ENCODE measurements at regions of chr2 and their contacts with region 1.

Region 1: DNA sequence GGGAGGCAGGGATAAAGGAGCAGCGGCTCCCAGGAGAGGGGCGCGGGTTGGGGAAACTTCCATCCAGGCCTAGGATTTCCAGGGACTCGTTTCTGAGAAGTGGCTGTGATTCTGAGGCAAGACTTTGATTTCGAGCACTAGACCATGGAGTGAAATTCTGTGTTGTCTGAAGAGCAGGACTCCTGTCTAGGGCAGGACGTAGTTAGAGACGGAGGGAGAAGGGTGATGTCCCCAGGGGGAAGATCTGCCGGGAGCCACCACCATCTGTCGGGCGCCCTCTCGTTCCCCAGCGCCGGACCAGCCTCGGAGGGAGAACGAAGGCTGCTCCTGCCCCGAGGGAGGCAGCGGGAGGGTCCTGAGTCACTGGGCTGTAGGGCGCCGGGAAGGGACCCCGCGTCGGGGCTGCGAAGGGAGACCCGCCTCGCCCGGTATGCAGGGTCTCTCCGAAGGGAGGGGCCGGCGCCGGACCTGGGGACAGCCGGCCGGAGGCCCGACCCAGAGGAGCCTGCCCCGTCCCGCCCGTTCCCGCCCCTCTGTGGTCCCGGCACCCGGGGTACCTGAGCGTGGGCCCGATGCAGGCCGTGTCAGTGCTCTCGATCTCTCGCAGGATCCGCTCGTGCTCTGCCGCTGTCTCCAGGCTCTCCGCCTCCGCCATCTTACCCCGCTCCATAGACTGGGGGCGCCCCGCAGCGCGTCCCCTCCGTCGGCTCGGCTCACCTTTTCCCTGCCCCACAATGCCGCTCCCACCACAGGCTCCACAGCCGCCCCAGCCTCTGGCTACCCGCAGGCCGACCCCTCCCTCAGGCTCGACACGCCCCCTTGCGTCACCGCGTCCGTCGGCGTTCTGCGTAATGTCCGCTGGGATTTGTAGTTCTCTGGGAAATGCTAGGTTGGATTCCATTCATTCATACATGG is at the start of gene EXOC6B:
- DNase-seq: peak; percentile 95 to 96
- ATAC-seq: peak; percentile 96 to 99 (median 97)
- H3K4me3 ChIP-seq: peak within 1 kb of the TSS; percentile 72 to 100 (median 90)
- H3K27ac ChIP-seq: peak within 1 kb of the TSS; percentile 72 to 92 (median 86)
- H3K4me1 ChIP-seq: peaks cover 3 to 49% (median 13%) of the 10 kb centered on the region in 9 donors
- H3K27me3 ChIP-seq: no peaks in the 10 kb centered on the region
- CTCF ChIP-seq: peak in 2 of 9 donors; percentile 26 to 45
- total RNA-seq, gene EXOC6B: 97.9 to 243 (median 158) TPM

Region 2: DNA sequence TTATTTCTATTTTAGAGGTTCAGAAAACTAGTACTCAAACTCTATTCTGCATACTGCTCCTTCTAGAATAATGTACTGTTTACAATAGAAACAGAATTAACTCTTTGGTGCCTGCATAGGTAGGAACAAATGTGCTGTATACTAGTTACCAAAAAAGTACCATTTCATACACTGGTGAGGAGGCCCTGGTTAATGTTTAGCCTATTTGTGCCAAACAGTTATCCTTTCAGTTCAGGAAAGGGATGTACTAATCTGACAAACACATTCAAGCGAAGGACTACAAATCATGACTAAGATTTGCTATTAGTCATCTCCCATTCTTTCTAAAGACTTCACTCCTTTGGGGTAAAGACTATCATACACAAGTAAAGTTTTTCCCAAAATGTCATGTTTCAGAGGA is 47.1 kb before region 1 on chr2:
- intact Hi-C with region 1: loop called in 4 of 10 experiments (anchors 1 to 5 kb)
- DNase-seq: no peak
- ATAC-seq: peak in 1 of 8 donors; percentile 55
- H3K4me3 ChIP-seq: no peak overlapping the region
- H3K27ac ChIP-seq: no peak overlapping the region
- H3K4me1 ChIP-seq: peaks cover 0 to 58% (median 42%) of the 10 kb centered on the region in 9 donors
- H3K27me3 ChIP-seq: no peaks in the 10 kb centered on the region
- CTCF ChIP-seq: no peak

Region 3: GRCh38 chr2:72788756-72789155 is 36.7 kb before region 1 on chr2:
- intact Hi-C with region 1: loop called in 3 of 10 experiments (anchors 5 kb)
- DNase-seq: no peak
- ATAC-seq: peak in 7 of 8 donors; percentile 51 to 93 (median 65)
- H3K4me3 ChIP-seq: no peak overlapping the region
- H3K27ac ChIP-seq: peak overlapping the region in 3 of 10 donors; percentile 3 to 25 (median 16)
- H3K4me1 ChIP-seq: peaks cover 2 to 31% (median 18%) of the 10 kb centered on the region in 9 donors
- H3K27me3 ChIP-seq: no peaks in the 10 kb centered on the region
- CTCF ChIP-seq: no peak

Region 4: DNA sequence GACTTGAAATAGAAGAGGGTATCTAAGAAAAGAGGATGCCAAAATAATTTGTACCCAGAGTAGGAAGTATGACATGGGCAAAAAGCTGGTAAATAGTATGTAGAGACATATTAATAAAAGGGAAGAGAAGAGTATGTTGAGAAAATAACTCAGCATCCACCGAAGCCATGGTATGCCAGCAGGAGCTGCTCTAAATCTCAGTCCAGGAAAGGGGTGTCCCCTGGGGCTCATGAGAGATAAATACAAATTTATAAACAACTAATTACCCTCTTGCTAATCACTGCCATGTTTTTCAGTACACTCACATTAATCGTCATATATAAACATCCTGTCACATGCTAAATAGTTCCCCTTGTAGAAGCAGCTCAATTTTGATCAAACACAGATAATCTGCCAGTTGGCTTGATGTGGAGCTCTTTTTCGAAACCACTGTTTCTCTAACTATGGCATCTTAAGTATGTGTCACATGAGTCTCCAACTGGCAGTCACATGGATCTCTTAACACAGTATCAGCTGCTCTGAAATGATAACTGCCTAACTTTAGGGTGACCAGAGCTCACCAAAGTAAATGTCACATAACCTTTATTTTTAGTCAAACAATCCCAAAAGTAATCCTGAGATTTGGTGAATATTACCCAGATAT is 31.6 kb before region 1 on chr2:
- intact Hi-C with region 1: loop called in 3 of 10 experiments (anchors 5 kb)
- DNase-seq: peak in 1 of 2 donors; percentile 21
- ATAC-seq: peak; percentile 56 to 92 (median 84)
- H3K4me3 ChIP-seq: peak overlapping the region in 1 of 10 donors; percentile 3
- H3K27ac ChIP-seq: peak overlapping the region in 9 of 10 donors; percentile 24 to 72 (median 57)
- H3K4me1 ChIP-seq: peaks cover 0 to 57% (median 30%) of the 10 kb centered on the region in 9 donors
- H3K27me3 ChIP-seq: no peaks in the 10 kb centered on the region
- CTCF ChIP-seq: no peak